GM12878 (cell line): ENCODE measurements at regions of chr5 and their contacts with region 1.

Region 1: GRCh38 chr5:10358999-10359398 is 5.5 kb downstream of the MARCHF6 start:
- DNase-seq: no peak
- ATAC-seq: no peak
- H3K4me3 ChIP-seq: no peak overlapping the region
- H3K27ac ChIP-seq: no peak overlapping the region
- H3K4me1 ChIP-seq: peaks cover 3% of the 10 kb centered on the region; the same call in 1 of the 2 replicates
- H3K27me3 ChIP-seq: no peaks in the 10 kb centered on the region
- CTCF ChIP-seq: no peak
- EP300 ChIP-seq: no peak
- POLR2A ChIP-seq: no peak
- RAD21 ChIP-seq: no peak

Region 2: GRCh38 chr5:10209004-10209403 is 150.0 kb before region 1 on chr5:
- CTCF ChIA-PET with region 1: no interaction called
- POLR2A ChIA-PET with region 1: no interaction called
- RAD21 ChIA-PET with region 1: no interaction called
- SMC1A ChIA-PET with region 1: no interaction called
- in situ Hi-C with region 1: no loop called
- intact Hi-C with region 1: no loop called
- DNase-seq: no peak
- ATAC-seq: no peak
- H3K4me3 ChIP-seq: no peak overlapping the region
- H3K27ac ChIP-seq: no peak overlapping the region
- H3K4me1 ChIP-seq: no peaks in the 10 kb centered on the region
- H3K27me3 ChIP-seq: no peaks in the 10 kb centered on the region
- CTCF ChIP-seq: no peak
- EP300 ChIP-seq: no peak
- POLR2A ChIP-seq: no peak
- RAD21 ChIP-seq: no peak

Region 3: GRCh38 chr5:10387690-10388089 is 28.7 kb after region 1 on chr5:
- CTCF ChIA-PET with region 1: interaction called, 11 read pairs
- POLR2A ChIA-PET with region 1: no interaction called
- RAD21 ChIA-PET with region 1: no interaction called
- SMC1A ChIA-PET with region 1: interaction called, 6 read pairs
- in situ Hi-C with region 1: no loop called
- intact Hi-C with region 1: no loop called
- DNase-seq: no peak
- ATAC-seq: no peak
- H3K4me3 ChIP-seq: no peak overlapping the region
- H3K27ac ChIP-seq: no peak overlapping the region
- H3K4me1 ChIP-seq: no peaks in the 10 kb centered on the region
- H3K27me3 ChIP-seq: no peaks in the 10 kb centered on the region
- CTCF ChIP-seq: no peak
- EP300 ChIP-seq: no peak
- POLR2A ChIP-seq: no peak
- RAD21 ChIP-seq: no peak

Region 4: GRCh38 chr5:10460252-10460906 is 101.4 kb after region 1 on chr5:
- CTCF ChIA-PET with region 1: no interaction called
- POLR2A ChIA-PET with region 1: no interaction called
- RAD21 ChIA-PET with region 1: no interaction called
- SMC1A ChIA-PET with region 1: no interaction called
- in situ Hi-C with region 1: no loop called
- intact Hi-C with region 1: no loop called
- DNase-seq: no peak
- ATAC-seq: peak; percentile 50
- H3K4me3 ChIP-seq: no peak overlapping the region
- H3K27ac ChIP-seq: no peak overlapping the region
- H3K4me1 ChIP-seq: no peaks in the 10 kb centered on the region
- H3K27me3 ChIP-seq: no peaks in the 10 kb centered on the region; a peak in 2 of 4 replicates
- CTCF ChIP-seq: no peak
- EP300 ChIP-seq: no peak
- POLR2A ChIP-seq: no peak
- RAD21 ChIP-seq: no peak